Heart right ventricle (tissue), 16 donors: ENCODE measurements at regions of chr5 and their contacts with region 1.

Region 1: DNA sequence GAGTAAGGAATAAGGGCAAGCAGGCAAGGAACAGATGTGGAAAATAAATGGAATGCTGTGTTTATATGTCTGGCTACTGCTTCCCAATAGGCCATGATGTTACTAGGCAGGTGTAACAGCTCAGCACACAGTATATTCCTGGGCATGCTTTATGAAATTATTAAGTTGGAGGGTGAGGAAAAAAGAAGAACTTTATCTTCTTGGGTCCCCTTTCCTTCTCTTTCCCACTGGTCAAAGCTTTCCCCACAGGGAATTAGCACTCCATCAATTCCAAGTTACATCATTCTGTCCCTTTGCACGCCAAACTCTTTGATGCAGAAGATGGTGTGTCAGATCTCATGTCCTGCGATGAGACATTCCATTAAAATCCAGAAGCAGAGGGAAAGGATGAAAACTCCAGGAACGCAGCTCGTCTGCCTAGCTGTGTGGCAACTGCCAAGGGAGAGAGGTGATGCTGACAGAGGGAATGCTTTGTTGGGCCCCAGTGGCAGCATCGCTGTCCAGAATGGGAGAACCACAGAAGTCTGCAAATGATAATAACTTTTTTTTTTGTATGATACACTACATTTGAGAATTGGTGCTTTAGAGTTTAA is 447.3 kb upstream of the ARRDC3 start:
- DNase-seq: no peak
- ATAC-seq: no peak
- H3K4me3 ChIP-seq: no peak overlapping the region
- H3K27ac ChIP-seq: no peak overlapping the region
- H3K4me1 ChIP-seq: peaks cover 0 to 9% (median 0%) of the 10 kb centered on the region in 9 donors
- H3K27me3 ChIP-seq: no peaks in the 10 kb centered on the region
- CTCF ChIP-seq: no peak

Region 2: GRCh38 chr5:91885291-91886265 is 55.1 kb after region 1 on chr5:
- intact Hi-C with region 1: loop called in 1 of 10 experiments (anchors 2 kb)
- DNase-seq: no peak
- ATAC-seq: no peak
- H3K4me3 ChIP-seq: no peak overlapping the region
- H3K27ac ChIP-seq: no peak overlapping the region
- H3K4me1 ChIP-seq: no peaks in the 10 kb centered on the region
- H3K27me3 ChIP-seq: no peaks in the 10 kb centered on the region
- CTCF ChIP-seq: no peak